Posterior vena cava (tissue), 2 donors: ENCODE measurements at regions of chr5 and their contacts with region 1.

Region 1: DNA sequence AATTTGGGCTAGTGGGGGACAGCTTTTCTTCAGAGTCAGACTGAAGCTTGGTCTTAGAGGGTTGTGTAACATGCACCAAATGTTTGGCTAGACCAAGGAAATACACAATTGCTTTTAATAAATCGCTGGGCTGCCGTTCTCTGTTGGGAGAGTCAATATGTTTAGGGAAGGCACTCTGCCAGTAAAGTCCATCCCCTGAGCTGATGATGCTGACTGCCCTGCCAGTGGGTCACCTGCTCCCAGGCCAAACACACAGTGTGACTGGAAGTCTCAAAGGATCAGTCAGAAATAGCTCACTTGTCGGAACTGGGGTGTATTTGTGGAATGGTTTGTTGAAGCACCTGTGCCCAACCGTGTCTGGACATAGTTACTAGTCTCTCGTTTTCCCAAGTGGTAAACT is 17.9 kb upstream of the ZNF474 start:
- DNase-seq: no peak

Region 2: DNA sequence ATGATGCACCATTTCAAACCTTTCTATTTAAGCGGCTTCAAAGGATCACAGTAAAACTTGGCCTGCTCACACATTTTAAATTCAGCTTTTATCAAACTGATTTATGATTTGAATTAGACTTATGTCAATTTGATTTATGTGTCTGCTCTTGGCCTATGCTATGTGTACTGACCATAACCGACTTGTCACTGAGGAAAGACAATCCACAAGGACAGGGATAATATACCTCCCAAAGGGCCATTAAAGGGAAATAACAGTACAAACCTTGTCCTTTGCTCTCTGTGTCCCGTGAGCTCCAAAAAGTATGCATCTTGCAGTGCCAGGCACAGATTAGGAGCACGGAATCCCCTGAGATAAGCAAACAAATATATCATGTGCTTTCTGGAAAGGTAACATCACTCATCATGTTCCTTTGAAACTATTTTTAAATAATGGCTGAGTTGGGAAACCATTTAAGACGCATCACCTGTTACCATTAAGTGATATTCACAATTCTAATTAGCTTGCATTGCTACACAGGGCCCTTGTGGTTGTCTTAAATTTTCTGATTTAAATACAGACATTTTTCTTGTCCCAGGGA is 291.7 kb before region 1 on chr5:
- intact Hi-C with region 1: loop called in 1 of 2 experiments (anchors 5 kb)
- DNase-seq: no peak